ENCODE measurements at regions of chr3 and their contacts with region 1.

Region 1: DNA sequence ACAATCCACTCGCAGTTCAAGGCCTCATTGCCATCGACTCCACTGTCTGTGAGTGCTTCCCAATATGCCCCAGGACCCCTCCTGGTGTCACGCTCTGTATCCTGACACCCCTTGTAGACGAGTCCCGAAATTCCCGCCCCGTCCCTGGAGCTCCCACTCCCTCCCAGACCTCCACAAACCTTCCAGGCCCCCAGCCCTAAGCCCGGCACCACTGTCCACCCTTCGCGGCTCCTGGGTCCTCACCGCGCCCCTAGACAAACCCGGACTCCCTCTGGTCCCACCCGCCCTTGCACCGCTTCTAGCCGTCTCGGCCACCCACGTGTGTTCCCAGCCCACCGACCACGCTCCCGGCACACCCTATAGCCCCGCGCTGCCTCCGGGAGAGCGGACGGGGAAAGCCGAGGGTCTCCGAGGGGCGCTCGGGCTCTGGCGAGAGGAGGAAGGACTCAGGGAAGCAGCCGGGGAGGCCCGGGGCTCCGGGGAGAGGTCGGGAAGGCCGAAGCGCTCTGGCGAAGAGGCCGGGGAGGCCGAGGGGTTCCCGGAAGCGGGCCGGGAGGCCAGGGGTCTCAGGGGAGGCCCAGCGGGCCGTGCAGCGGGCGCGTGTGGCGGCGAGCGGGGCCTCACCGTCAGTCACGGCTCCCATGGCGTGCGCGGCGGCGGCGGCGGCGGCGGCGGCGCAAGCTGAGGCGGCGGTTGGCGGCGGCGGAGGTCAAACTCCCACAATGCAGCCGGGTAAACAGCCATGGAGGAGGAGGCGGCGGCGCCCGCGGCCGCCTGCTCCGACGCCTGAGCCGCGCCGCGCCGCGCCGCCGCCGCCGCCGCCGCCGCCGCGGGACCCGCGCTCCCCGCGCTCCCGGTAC is at the starts of genes ATXN7 and THOC7:
- DNase-seq: peak; percentile 94
- H3K4me3 Mint-ChIP-seq: peak within 1 kb of the TSS; percentile 94
- H3K27ac Mint-ChIP-seq: peak within 1 kb of the TSS; percentile 98
- H3K4me1 Mint-ChIP-seq: peaks cover 47% of the 10 kb centered on the region
- H3K27me3 Mint-ChIP-seq: no peaks in the 10 kb centered on the region
- total RNA-seq, gene ATXN7: 37.8 and 39.6 TPM in 2 replicates
- total RNA-seq, gene THOC7: 106 and 109 TPM in 2 replicates

Region 2: DNA sequence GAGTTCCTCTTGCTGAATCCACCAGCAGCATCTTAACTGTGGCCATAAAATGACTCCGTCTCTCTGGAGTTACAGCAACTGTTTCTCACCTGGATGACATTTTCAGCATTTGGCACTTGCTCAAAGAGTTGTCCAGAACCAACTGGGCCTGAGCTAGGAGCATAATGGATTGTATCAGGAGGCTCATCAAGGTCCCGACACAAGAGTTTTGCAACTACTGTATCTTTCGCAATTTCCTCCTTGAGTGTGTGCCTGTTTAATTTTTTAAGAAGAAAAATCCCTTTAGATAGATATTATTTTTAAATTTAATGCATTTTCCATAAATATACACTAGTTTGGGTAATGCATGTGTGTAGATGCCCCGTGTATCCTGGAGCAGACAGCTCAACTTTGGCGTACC is 88.6 kb before region 1 on chr3:
- intact Hi-C with region 1: no loop called
- DNase-seq: no peak
- H3K4me3 Mint-ChIP-seq: no peak overlapping the region
- H3K27ac Mint-ChIP-seq: no peak overlapping the region
- H3K4me1 Mint-ChIP-seq: no peaks in the 10 kb centered on the region
- H3K27me3 Mint-ChIP-seq: no peaks in the 10 kb centered on the region

Region 3: DNA sequence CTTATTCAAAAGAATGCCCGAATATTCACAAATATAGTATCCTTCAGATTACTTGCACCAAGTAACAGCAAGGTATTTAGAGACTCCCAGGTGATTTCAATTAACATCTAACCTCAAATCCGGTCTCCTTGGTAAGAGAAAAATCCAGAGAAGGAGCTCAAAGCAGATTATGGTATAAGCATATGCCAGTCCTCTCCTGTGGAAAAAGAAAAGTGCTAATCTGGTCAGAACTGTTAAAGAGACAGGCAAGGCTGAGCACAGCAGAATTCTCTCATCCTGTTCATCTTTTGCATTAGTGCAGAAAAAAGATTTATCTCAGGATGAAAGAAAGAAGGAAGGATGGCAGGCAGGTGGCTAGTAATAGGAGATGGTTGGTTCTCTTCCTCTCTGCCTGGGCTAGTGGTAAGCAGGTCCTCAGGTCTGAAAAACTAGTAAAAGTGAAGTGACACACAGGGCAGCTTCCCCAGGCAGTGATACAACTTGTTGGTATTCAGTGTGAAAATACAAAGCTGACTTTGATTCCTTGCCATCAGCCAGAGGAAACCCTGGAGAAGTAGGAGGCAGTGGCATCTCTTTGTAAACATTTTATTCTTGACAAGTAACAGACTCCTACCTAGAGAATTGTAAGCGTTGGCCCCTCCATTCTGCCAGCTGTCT is 14.5 kb after region 1 on chr3:
- intact Hi-C with region 1: loop called (anchors 2 kb)
- DNase-seq: no peak
- H3K4me3 Mint-ChIP-seq: no peak overlapping the region
- H3K27ac Mint-ChIP-seq: peak overlapping the region; percentile 16
- H3K4me1 Mint-ChIP-seq: peaks cover 35% of the 10 kb centered on the region
- H3K27me3 Mint-ChIP-seq: no peaks in the 10 kb centered on the region

Region 4: DNA sequence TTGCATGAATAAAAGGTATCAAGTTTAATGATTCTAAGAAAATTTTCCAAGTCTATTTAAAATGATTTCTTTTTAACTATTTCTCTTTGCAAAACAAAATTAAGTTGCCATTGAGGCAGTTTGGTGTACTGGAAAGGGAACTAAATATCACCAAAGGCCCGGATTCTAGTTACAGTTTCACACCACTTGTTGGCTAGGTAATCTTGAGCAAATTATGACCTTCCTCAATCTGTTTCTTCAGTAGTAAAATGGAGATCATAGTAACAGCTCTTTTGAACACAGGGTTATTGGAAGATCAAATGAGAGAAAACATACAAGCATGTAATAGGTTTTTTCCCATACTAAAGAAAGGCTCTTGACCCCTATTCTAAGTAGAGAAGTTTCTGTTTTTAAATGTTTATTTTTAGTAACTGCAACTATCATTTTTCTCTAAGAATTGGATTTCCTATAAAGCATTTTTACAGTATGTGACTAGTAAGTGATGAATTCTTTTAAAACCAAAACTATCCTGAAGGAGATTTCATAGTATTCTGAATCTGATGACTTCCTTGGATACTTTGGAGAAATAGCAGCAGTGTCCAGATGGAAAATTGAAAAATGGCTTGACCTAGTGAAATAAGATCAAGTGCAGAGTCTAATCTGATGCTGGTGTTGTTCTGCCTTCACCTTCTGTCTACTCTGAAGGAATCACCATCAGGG is 33.1 kb after region 1 on chr3:
- intact Hi-C with region 1: loop called (anchors 5 kb)
- DNase-seq: no peak
- H3K4me3 Mint-ChIP-seq: no peak overlapping the region
- H3K27ac Mint-ChIP-seq: peak overlapping the region; percentile 1
- H3K4me1 Mint-ChIP-seq: peaks cover 42% of the 10 kb centered on the region
- H3K27me3 Mint-ChIP-seq: no peaks in the 10 kb centered on the region

Region 5: DNA sequence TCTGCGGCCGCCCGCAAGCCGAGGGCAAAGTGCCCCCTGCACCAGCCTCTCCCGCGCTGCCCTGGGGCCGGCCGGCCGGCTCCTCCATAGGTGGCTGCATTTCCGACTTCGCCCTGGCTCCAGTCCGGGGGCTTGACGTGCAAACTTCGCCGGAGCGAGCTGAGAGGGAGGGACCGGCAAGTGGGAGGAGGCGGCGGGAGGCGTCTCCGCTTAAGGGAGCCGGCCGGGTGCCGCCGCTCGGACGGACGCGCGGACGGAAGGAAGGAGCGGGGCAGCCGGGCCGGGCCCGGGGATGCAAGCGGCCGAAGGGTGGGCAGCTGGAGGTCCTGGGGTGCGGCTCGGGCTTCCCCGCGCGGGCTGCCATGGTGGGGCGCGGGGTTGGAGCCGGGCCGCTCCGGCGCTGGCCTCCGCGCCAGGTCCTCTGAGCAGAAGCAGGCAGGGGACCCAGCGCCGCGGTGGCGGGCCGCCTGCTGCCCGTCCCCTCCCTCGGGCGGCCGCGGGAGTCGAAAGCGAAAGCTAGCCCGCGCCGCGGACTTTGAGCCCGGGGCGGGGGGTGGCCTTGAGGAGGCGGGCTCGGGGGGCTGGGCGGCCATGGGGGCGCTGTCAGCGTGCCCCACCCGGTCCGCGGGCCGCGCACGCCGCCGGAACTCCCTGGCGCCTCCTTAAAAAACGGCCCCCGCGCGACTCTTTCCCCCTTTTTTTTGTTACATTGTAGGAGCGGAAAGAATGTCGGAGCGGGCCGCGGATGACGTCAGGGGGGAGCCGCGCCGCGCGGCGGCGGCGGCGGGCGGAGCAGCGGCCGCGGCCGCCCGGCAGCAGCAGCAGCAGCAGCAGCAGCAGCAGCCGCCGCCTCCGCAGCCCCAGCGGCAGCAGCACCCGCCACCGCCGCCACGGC is 48.7 kb after region 1 on chr3 and contains the start of gene SCAANT1:
- intact Hi-C with region 1: loop called (anchors 1 kb)
- DNase-seq: peak; percentile 95
- H3K4me3 Mint-ChIP-seq: peak within 1 kb of the TSS; percentile 92
- H3K27ac Mint-ChIP-seq: peak within 1 kb of the TSS; percentile 94
- H3K4me1 Mint-ChIP-seq: peaks cover 40% of the 10 kb centered on the region
- H3K27me3 Mint-ChIP-seq: no peaks in the 10 kb centered on the region
- total RNA-seq, gene SCAANT1: not detected in 2 replicates

Region 6: DNA sequence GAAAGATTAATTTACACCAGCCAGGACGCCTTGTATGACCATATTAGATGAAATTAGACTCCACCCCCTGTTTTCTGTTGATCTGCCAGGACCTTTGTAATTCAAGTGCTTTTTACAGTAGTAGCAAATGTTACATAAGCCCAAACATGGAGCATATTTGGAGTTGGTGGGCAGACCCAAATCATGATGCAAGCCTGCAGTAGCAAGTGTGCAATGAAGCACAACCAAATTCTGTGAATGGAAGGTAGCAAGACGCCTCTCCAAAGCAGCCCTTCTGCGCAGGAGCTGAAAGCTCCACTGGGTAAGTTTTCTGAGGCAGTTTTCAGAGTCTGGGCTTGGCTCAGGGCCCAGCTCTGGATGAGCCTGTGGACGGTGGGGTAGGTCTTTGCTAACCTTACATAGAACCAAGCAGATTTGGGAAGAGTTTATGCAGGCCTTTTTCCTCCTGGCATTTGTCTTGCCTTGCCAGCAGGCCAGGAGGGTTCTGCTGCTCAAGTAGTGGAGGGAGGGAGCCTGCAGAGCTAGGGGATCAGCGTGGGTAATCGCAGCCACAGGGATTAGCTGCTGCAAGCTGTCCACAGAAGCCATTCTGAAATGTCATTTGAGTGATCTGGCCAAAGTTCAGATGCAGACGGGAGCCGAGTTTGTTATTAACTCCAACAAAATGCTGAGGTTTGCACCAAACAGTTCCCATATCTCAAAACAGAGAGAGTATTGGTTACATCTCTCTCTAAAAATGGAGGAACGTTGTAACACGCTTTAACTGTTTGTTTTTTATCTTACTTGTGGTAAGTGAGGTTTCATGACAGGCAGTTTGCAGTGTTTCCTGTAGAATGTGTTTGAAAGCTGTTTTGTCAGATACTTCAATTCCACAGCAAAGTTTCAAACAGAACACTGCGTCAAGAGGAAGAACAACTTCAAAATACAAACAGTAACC is 104.6 kb after region 1 on chr3:
- intact Hi-C with region 1: loop called (anchors 5 kb)
- DNase-seq: peak; percentile 82
- H3K4me3 Mint-ChIP-seq: peak overlapping the region; percentile 87
- H3K27ac Mint-ChIP-seq: peak overlapping the region; percentile 96
- H3K4me1 Mint-ChIP-seq: peaks cover 80% of the 10 kb centered on the region
- H3K27me3 Mint-ChIP-seq: no peaks in the 10 kb centered on the region

Region 7: DNA sequence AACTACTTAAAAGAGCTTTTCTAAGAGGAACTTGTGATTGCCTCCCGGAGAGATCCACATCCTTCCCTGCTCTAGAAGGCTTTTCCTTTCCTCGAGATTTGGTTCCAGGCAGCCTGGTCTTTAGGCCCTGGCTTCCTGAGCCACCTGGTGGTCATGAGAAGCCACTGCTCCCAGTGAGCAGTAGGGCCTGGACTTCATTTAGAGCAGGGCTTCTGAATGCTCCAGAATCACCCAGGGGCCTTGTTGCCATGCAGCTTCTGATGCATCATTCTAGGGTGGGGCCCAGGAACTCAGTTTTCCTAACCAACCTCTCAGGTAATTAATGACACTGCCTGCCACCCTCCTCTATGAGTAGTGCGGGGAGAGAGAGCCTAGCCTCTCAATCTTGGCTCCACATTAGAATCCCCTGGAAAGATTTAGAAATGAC is 130.3 kb after region 1 on chr3:
- intact Hi-C with region 1: loop called (anchors 5 kb)
- DNase-seq: peak; percentile 87
- H3K4me3 Mint-ChIP-seq: no peak overlapping the region
- H3K27ac Mint-ChIP-seq: peak overlapping the region; percentile 15
- H3K4me1 Mint-ChIP-seq: peaks cover 17% of the 10 kb centered on the region
- H3K27me3 Mint-ChIP-seq: no peaks in the 10 kb centered on the region

Region 8: DNA sequence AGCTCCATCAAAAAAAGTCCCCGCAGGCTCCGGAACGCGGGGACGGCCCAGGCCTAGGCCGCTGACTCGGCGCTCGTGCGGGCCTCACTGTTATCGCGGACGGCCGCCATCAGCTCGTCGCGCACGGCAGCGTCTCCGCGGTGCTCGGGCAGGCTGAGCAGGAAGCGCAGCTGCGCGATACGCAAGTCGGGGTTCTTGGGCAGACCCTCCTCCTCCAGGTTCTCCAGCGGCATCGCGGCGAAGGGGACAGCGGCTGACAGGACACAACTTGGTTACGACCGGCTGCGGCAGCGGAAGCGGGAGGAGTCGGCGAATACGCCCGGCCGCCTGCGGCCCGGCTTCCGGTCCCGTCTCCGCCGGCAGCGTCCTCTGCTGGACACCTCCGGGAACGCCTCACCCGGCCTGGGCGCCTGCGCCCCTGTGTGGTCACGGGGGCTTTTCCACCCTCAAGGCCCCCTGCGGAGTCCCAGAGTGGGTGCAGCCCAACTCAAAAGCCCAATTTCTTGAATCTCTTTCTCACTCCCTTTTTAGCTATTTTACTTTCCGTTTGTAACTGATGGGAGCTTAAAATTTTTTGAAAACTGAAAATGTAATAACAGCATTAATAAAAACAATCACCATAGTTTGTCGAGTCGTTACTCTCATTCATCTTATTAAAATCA is 159.9 kb after region 1 on chr3 and contains the start of gene PSMD6:
- intact Hi-C with region 1: loop called (anchors 1 kb)
- DNase-seq: peak; percentile 99
- H3K4me3 Mint-ChIP-seq: peak within 1 kb of the TSS; percentile 79
- H3K27ac Mint-ChIP-seq: peak within 1 kb of the TSS; percentile 92
- H3K4me1 Mint-ChIP-seq: peaks cover 19% of the 10 kb centered on the region
- H3K27me3 Mint-ChIP-seq: peaks cover 13% of the 10 kb centered on the region
- total RNA-seq, gene PSMD6: 141 and 146 TPM in 2 replicates

Region 9: GRCh38 chr3:64209866-64210621 is 346.7 kb after region 1 on chr3:
- intact Hi-C with region 1: no loop called
- DNase-seq: no peak
- H3K4me3 Mint-ChIP-seq: no peak overlapping the region
- H3K27ac Mint-ChIP-seq: no peak overlapping the region
- H3K4me1 Mint-ChIP-seq: no peaks in the 10 kb centered on the region
- H3K27me3 Mint-ChIP-seq: peaks cover 2% of the 10 kb centered on the region